Psoas muscle (tissue), 8 donors: ENCODE measurements at regions of chr18 and their contacts with region 1.

Region 1: DNA sequence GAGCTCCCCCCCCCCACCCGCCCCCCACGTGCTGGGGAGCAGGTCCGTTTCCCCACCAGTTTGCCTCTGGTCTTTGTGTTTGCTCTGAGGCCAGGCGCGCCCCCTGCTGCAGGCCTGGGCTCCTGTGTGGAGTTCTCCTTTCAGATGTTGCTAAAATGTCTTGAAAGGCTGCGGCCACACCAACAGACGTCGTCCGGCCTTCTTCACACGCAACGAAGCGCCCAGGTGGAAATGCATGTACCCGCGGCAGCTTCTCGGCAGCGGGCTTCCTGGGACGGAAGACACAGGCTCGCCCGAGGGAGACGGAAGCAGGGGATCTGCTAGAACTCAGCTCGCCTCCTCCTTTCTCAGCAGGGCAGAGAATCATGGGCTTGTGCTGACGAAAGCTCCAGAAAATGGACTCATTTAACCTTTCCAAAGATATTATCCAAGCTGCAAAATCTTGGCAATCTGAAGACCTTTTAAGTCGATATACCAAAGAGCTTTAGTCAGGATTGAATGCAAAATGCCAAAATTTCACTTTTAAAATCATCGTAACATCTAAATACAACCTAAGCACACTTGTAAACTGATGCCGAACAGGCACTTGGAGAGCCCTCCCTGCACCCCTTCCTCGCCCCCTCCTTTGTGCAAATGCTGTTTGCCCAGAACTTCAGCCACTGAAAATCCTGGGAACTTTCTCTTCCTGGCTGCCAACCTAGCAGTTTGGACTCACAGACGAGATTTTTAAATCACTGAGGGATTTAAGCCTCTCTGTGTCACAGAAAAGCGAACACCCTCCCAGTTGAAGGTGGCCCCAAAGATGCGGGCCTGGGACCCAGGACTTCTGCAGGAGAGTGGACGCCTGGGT is 125.5 kb upstream of the ZNF516 start:
- DNase-seq: peak; percentile 76 to 82
- ATAC-seq: peak; percentile 81 to 94 (median 84)
- H3K4me3 ChIP-seq: peak overlapping the region; percentile 61
- H3K27ac ChIP-seq: no peak overlapping the region
- H3K4me1 ChIP-seq: peaks cover 4% of the 10 kb centered on the region
- H3K27me3 ChIP-seq: peaks cover 0 to 2% (median 0%) of the 10 kb centered on the region in 3 donors
- CTCF ChIP-seq: peak; percentile 57

Region 2: GRCh38 chr18:76398896-76399612 is 221.5 kb before region 1 on chr18:
- intact Hi-C with region 1: loop called (anchors 2 to 5 kb)
- DNase-seq: peak; percentile 82 to 90
- ATAC-seq: peak; percentile 92 to 96 (median 95)
- H3K4me3 ChIP-seq: no peak overlapping the region
- H3K27ac ChIP-seq: no peak overlapping the region
- H3K4me1 ChIP-seq: peaks cover 17% of the 10 kb centered on the region
- H3K27me3 ChIP-seq: no peaks in the 10 kb centered on the region
- CTCF ChIP-seq: peak; percentile 98

Region 3: DNA sequence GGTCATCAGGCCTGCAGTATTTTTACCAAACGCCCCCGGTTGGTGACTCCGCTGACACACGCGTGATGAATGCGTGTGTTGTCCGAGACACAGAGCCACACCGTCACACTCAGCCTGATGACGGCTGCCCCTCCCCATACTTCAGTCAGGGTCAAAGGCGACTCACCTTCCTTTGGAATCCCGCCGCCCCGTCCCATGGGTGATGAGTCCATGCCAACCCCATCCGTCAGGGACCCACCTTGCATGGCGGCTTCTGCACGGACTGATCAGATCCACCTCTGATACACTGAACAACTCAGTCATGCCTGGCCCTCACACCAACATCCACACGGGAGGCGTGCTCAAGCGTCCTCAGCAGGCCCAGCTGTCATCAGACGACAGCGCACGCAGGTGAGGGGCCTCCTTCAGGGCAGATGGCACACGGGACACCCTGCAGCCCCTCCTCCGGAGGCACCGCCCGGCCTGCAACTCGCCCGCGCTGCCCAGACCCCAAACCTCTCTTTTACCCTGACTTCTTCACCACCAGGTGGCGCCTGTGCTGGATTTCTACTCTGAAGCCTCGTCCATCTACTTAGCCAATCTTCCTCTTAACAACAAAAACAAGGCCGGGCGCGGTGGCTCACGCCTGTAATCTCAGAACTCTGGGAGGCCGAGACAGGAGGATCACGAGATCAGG is 214.7 kb before region 1 on chr18:
- intact Hi-C with region 1: loop called in 1 of 2 experiments (anchors 5 kb)
- DNase-seq: peak; percentile 64 to 81
- ATAC-seq: peak; percentile 58 to 84 (median 67)
- H3K4me3 ChIP-seq: no peak overlapping the region
- H3K27ac ChIP-seq: no peak overlapping the region
- H3K4me1 ChIP-seq: peaks cover 10% of the 10 kb centered on the region
- H3K27me3 ChIP-seq: no peaks in the 10 kb centered on the region
- CTCF ChIP-seq: peak; percentile 62

Region 4: DNA sequence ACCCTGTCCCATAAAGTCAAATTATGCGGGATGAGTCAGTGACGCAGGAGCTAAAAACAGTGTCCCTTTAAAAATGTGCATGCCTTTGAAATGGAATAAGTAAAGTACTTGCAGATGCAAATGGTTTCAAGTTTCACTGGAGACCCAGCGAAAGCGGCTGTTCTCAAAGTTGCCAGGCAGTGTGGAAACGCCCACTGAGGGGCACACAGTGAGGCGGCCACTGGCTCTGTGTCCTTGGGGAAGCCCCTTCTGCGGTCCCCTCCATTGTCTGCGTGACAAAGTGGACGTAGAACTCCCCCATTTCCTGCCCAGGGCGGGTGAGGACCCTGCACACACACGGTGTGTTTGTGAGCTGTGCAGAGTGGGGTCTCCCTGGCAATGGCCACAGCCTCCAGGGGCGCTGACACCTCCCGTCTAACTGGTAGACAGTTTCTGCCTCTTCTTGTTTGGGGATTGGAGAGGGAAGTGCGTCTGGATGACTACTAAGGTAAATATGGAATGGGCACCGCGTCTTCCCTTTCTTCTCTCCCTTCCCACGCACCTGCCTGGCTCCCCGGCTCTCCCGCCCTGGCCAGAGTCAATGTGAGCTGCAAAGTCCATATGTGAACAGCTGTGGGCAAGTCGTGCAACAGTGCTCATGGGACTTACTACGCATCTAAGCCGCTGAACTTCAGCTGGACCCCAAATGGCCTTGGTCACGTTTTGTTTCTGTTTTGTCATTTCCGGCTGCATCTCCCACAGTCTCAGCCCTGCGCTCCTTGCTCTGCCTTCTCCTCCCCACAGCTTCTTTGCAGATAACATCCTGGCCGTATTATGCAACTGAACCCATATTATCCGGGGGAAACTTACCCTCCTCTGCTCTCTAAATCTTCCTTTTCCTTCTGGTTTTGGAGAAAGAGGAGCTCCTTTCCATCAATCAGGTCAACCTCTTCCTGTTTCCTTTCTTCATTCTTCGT is 91.8 kb before region 1 on chr18:
- intact Hi-C with region 1: loop called in 1 of 2 experiments (anchors 10 kb)
- DNase-seq: peak in 1 of 2 donors; percentile 22
- ATAC-seq: peak; percentile 46 to 67 (median 56)
- H3K4me3 ChIP-seq: peak overlapping the region; percentile 61
- H3K27ac ChIP-seq: peak overlapping the region; percentile 55
- H3K4me1 ChIP-seq: peaks cover 21% of the 10 kb centered on the region
- H3K27me3 ChIP-seq: peaks cover 0 to 37% (median 2%) of the 10 kb centered on the region in 3 donors
- CTCF ChIP-seq: no peak

Region 5: GRCh38 chr18:76565238-76566180 is 55.0 kb before region 1 on chr18:
- intact Hi-C with region 1: loop called in 1 of 2 experiments (anchors 5 kb)
- DNase-seq: peak; percentile 70 to 79
- ATAC-seq: peak; percentile 79 to 97 (median 93)
- H3K4me3 ChIP-seq: peak overlapping the region; percentile 56
- H3K27ac ChIP-seq: peak overlapping the region; percentile 72
- H3K4me1 ChIP-seq: no peaks in the 10 kb centered on the region
- H3K27me3 ChIP-seq: no peaks in the 10 kb centered on the region
- CTCF ChIP-seq: no peak